ENCODE measurements at regions of chr11 and their contacts with region 1.

Region 1: DNA sequence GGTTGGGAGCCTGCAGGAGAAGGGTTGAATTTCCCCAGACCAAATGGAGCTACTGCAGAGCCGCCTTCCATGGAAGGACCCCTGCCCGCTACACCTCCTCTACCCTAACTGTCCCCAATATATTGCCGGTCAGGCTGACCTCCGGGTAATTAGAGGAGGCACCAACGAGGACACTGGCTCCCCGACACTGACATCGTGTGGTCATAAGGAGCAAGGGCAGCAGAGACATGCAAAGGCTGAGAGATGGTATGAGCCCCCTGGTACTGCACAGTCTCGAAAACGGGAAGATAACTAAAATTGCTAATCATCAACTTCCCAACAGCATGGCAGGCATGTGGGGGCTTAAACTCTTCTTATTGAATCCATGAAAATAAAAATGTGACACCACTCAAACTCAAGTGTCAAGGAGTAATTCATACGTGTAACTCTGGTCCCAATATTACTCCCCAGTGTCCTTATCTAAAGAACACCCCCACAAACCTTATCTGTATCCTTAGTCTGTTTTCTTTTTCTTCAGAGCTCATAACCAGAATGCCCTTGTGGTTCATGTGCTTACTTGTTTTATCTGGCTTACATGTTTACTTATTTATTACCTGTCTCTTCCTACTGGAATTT is 4.4 kb downstream of the CAVIN3 start:
- DNase-seq: peak; percentile 80
- H3K4me3 Mint-ChIP-seq: no peak overlapping the region
- H3K27ac Mint-ChIP-seq: no peak overlapping the region
- H3K4me1 Mint-ChIP-seq: peaks cover 25% of the 10 kb centered on the region
- H3K27me3 Mint-ChIP-seq: peaks cover 47% of the 10 kb centered on the region

Region 2: DNA sequence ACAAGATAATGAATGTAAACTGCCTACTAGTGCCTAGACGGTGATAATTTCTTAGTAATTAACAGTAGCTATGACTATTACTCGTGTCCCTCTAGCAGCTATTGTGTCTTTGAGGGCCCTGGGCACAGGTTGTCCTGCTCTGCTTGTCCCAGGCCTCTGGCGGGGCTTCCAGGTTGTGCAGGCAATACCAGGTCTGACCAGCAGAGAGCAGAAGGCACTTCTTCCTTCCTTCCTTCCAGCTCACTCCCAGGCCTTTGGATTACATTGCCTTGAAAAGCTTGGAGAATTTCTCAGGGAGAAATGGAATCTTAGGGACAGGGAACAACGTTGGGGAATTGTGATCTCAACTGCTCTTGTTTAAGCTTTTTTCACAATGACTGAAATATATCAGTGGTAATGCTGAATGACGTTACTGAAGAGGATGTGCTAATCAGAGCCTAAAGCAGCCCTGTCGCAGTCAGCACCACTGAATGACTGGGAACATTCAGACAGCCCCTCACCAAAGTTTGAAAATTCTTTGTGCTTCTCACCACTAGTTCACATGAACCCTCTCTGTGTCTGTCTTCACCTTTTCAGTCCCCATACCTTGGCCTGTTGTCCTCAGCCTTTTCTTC is 64.7 kb before region 1 on chr11:
- intact Hi-C with region 1: loop called (anchors 1 kb)
- DNase-seq: peak; percentile 86
- H3K4me3 Mint-ChIP-seq: no peak overlapping the region
- H3K27ac Mint-ChIP-seq: no peak overlapping the region
- H3K4me1 Mint-ChIP-seq: no peaks in the 10 kb centered on the region
- H3K27me3 Mint-ChIP-seq: peaks cover 11% of the 10 kb centered on the region

Region 3: GRCh38 chr11:6458352-6459098 is 142.6 kb after region 1 on chr11:
- intact Hi-C with region 1: no loop called
- DNase-seq: no peak
- H3K4me3 Mint-ChIP-seq: no peak overlapping the region
- H3K27ac Mint-ChIP-seq: no peak overlapping the region
- H3K4me1 Mint-ChIP-seq: no peaks in the 10 kb centered on the region
- H3K27me3 Mint-ChIP-seq: no peaks in the 10 kb centered on the region

Region 4: DNA sequence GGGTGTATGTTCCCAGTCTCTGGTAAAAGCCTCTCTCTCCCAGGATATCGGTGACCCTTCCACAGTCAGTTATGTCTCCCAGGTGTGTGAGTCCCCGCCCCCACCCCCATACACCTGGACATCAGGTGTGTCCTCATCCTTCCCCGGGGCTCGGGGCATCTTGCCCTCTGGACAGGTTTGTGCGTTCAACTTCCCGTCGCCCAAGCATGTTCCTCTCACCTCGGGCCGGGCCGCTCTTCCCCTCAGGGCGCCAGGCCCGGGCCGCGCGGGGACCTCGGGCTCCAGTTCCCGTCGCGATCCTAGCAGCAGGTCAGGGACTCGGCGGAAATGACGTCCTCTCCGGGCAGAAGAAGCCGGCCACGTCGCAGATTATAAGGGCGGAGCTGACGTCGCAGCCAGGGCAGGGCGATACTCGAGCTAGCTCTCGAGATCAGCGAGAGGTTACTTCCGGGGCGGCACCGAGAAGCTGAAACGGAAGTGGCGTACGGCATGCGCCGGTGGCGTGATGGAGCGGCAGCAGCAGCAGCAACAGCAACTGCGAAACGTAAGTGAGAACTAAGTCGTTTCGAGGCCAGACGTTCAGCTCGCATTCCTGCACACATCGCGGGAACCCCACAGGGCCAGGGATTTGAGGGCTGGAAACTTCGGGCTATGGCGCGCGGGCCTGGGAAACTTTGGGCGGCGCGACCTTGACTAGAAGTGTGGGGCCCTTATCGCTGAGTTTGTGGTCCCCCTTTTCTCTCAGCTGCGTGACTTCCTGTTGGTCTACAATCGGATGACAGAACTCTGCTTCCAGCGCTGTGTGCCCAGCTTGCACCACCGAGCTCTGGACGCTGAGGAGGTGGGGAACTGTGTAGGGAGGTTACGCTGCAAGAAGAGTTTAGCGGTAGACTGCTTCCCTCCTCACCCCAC is 165.3 kb after region 1 on chr11 and contains the starts of genes ARFIP2 and TIMM10B:
- intact Hi-C with region 1: loop called (anchors 5 kb)
- DNase-seq: peak; percentile 99
- H3K4me3 Mint-ChIP-seq: peak within 1 kb of the TSS; percentile 94
- H3K27ac Mint-ChIP-seq: peak within 1 kb of the TSS; percentile 98
- H3K4me1 Mint-ChIP-seq: peaks cover 30% of the 10 kb centered on the region
- H3K27me3 Mint-ChIP-seq: no peaks in the 10 kb centered on the region
- total RNA-seq, gene ARFIP2: 50.8 and 51.2 TPM in 2 replicates
- total RNA-seq, gene TIMM10B: 41.3 and 47.4 TPM in 2 replicates

Region 5: GRCh38 chr11:6746086-6746618 is 430.2 kb after region 1 on chr11:
- intact Hi-C with region 1: loop called (anchors 5 kb)
- DNase-seq: peak; percentile 87
- H3K4me3 Mint-ChIP-seq: no peak overlapping the region
- H3K27ac Mint-ChIP-seq: no peak overlapping the region
- H3K4me1 Mint-ChIP-seq: peaks cover 33% of the 10 kb centered on the region
- H3K27me3 Mint-ChIP-seq: no peaks in the 10 kb centered on the region

Region 6: DNA sequence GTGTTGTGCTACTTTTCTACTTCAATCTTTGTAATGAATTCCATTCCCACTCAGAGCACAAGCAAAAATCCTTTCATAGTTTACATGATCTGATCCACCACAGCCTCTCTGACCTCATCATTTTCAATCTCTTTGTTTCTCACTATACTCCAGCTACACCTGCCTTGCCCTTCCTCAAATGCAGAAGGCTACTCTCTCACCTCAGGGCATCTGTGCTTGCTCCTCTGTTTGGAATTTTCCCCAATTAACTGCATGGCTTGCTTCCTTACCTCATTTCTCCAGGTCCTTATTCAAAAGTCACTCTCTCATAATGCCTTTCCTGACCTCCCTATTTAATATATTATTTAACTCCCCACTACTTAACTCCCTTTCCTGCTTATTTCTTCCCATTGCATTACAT is 1068.8 kb after region 1 on chr11:
- intact Hi-C with region 1: no loop called
- DNase-seq: no peak
- H3K4me3 Mint-ChIP-seq: no peak overlapping the region
- H3K27ac Mint-ChIP-seq: no peak overlapping the region
- H3K4me1 Mint-ChIP-seq: no peaks in the 10 kb centered on the region
- H3K27me3 Mint-ChIP-seq: no peaks in the 10 kb centered on the region

Measured in activated CD4-positive, alpha-beta T cell treated with anti-CD3 and anti-CD28 coated beads, Interleukin-2, amount 10 ng/mL, durations not matched to agents 24 days and 14 days (primary cell).